Psoas muscle (tissue), 8 donors: ENCODE measurements at regions of chr2 and their contacts with region 1.

Region 1: DNA sequence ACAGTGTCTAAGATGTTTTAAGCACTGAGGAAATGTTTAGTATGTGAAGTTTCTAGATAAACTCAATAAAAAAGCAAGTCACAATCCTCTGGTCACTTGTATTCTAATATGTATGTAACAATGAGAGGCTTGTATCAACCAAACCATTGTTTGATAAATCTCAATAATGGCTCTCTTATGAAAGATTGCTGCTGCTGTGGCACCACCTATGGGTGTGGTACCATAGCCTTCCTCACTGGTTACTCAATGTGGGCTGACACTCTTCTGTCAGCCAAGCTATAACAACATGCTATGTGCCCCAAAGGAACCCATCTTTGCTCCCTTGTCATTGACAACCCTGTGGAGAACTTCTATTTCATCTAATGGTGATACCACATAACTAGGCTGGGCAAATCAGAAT is 12.6 kb upstream of the RAB1A start:
- DNase-seq: no peak
- ATAC-seq: peak in 3 of 4 donors; percentile 46 to 54 (median 50)
- H3K4me3 ChIP-seq: no peak overlapping the region
- H3K27ac ChIP-seq: no peak overlapping the region
- H3K4me1 ChIP-seq: no peaks in the 10 kb centered on the region
- H3K27me3 ChIP-seq: no peaks in the 10 kb centered on the region
- CTCF ChIP-seq: no peak

Region 2: GRCh38 chr2:64819774-64820696 is 322.5 kb before region 1 on chr2:
- intact Hi-C with region 1: no loop called
- DNase-seq: no peak
- ATAC-seq: no peak
- H3K4me3 ChIP-seq: no peak overlapping the region
- H3K27ac ChIP-seq: no peak overlapping the region
- H3K4me1 ChIP-seq: no peaks in the 10 kb centered on the region
- H3K27me3 ChIP-seq: no peaks in the 10 kb centered on the region
- CTCF ChIP-seq: no peak

Region 3: GRCh38 chr2:65056215-65057053 is 86.1 kb before region 1 on chr2 and contains the start of gene CEP68:
- intact Hi-C with region 1: no loop called
- DNase-seq: peak; percentile 97 to 98
- ATAC-seq: peak; percentile 95 to 97 (median 96)
- H3K4me3 ChIP-seq: peak within 1 kb of the TSS; percentile 84
- H3K27ac ChIP-seq: peak within 1 kb of the TSS; percentile 94
- H3K4me1 ChIP-seq: peaks cover 41% of the 10 kb centered on the region
- H3K27me3 ChIP-seq: no peaks in the 10 kb centered on the region
- CTCF ChIP-seq: no peak
- total RNA-seq, gene CEP68: 28.2 to 63.3 (median 38.9) TPM

Region 4: GRCh38 chr2:65177751-65178442 is 35.4 kb after region 1 on chr2:
- intact Hi-C with region 1: loop called in 1 of 2 experiments (anchors 5 kb)
- DNase-seq: no peak
- ATAC-seq: no peak
- H3K4me3 ChIP-seq: no peak overlapping the region
- H3K27ac ChIP-seq: no peak overlapping the region
- H3K4me1 ChIP-seq: no peaks in the 10 kb centered on the region
- H3K27me3 ChIP-seq: no peaks in the 10 kb centered on the region
- CTCF ChIP-seq: no peak

Region 5: GRCh38 chr2:65566620-65567019 is 424.1 kb after region 1 on chr2:
- intact Hi-C with region 1: no loop called
- DNase-seq: no peak
- ATAC-seq: peak in 1 of 4 donors; percentile 16
- H3K4me3 ChIP-seq: no peak overlapping the region
- H3K27ac ChIP-seq: no peak overlapping the region
- H3K4me1 ChIP-seq: peaks cover 6% of the 10 kb centered on the region
- H3K27me3 ChIP-seq: no peaks in the 10 kb centered on the region
- CTCF ChIP-seq: no peak